ENCODE measurements at regions of chr6 and their contacts with region 1.

Region 1: GRCh38 chr6:6676910-6677441 is 88.5 kb downstream of the LY86 start:
- DNase-seq: peak; percentile 70
- H3K4me3 Mint-ChIP-seq: no peak overlapping the region
- H3K27ac Mint-ChIP-seq: no peak overlapping the region
- H3K4me1 Mint-ChIP-seq: peaks cover 24% of the 10 kb centered on the region
- H3K27me3 Mint-ChIP-seq: no peaks in the 10 kb centered on the region

Region 2: GRCh38 chr6:6788394-6789020 is 111.5 kb after region 1 on chr6:
- intact Hi-C with region 1: loop called (anchors 1 kb)
- DNase-seq: no peak
- H3K4me3 Mint-ChIP-seq: no peak overlapping the region
- H3K27ac Mint-ChIP-seq: no peak overlapping the region
- H3K4me1 Mint-ChIP-seq: peaks cover 21% of the 10 kb centered on the region
- H3K27me3 Mint-ChIP-seq: peaks cover 21% of the 10 kb centered on the region

Region 3: DNA sequence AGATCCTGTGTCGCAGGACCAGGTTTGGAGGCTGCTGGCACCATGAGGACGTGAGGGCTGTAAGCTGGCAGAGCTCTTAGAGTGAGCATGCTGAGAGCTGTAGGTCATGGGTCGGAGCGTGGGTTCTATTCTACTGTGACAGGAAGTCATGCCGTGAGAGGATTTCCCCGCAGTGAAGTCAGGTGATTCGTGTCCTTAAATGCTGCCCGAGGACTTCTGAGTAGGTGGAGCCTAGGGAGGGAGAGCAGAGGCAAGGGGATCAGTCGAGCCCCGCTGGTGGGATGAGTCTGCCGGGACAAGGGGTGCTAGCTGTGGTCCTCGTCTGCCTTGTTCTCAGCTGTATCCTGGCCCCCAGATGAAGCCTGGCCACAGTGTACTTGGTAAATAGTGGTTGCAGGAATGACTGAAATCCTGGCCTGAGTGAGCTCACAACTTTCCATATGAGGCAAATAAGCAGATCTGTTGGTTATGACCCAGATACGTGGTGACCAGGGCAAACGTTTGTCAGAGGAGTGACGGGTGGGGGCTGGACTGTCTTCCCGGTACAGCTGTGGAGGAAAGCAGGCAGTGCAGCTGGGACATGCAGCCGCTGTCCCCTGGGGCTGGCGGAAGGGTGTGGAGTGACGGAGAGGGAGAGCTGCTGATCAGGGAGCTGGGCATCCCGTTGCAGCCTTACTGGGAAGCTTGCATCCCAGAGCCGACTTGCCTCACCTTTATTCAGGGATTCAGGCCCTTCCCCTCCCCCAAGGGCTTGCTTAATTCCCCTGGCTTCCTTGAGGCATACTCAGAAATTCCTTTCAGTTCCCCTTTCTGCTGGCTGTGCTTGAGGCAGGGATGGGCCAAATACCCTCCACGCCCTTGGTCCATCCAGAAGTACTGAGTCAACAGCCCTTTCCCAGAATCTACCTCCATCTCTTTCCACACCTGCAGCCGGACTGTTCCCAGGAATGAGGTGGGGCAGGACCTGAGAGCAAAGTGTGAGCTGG is 179.9 kb after region 1 on chr6:
- intact Hi-C with region 1: loop called (anchors 2 kb)
- DNase-seq: peak; percentile 45
- H3K4me3 Mint-ChIP-seq: peak overlapping the region; percentile 65
- H3K27ac Mint-ChIP-seq: peak overlapping the region; percentile 89
- H3K4me1 Mint-ChIP-seq: peaks cover 42% of the 10 kb centered on the region
- H3K27me3 Mint-ChIP-seq: peaks cover 8% of the 10 kb centered on the region

Region 4: DNA sequence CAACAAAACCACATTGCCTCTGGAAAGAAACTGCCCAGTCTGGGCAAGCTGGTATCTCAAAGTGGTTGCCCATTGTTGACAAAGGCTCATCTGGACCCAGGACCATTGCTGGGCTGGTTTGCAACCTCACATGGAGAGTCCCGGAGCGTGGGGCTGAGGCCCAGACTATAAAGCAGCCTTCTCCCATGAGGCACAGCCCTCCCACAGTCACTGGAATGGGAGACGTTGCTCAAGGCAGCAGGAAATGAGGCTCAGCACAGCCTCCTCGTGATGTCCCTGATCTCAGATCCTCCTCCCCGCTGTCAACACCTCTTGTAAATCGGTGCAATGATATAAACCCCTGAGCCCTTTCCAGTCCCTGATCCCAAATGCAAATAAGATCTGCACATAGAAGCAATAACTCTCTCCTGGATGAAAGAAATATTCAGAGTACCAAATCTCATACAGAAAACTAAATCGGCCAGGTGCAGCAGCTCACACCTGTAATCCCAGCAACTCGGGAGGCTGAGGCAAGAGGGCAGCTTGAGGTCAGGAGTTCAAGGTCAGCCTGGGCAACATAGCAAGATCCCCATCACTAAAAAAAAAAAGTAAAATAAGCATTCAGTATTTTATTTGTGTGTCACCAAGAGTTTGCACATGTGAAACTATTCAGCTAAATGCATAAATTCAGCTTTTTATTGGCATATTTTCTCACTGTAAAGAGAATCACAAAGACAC is 327.8 kb after region 1 on chr6:
- intact Hi-C with region 1: loop called (anchors 10 kb)
- DNase-seq: no peak
- H3K4me3 Mint-ChIP-seq: no peak overlapping the region
- H3K27ac Mint-ChIP-seq: no peak overlapping the region
- H3K4me1 Mint-ChIP-seq: no peaks in the 10 kb centered on the region
- H3K27me3 Mint-ChIP-seq: peaks cover 18% of the 10 kb centered on the region

Region 5: DNA sequence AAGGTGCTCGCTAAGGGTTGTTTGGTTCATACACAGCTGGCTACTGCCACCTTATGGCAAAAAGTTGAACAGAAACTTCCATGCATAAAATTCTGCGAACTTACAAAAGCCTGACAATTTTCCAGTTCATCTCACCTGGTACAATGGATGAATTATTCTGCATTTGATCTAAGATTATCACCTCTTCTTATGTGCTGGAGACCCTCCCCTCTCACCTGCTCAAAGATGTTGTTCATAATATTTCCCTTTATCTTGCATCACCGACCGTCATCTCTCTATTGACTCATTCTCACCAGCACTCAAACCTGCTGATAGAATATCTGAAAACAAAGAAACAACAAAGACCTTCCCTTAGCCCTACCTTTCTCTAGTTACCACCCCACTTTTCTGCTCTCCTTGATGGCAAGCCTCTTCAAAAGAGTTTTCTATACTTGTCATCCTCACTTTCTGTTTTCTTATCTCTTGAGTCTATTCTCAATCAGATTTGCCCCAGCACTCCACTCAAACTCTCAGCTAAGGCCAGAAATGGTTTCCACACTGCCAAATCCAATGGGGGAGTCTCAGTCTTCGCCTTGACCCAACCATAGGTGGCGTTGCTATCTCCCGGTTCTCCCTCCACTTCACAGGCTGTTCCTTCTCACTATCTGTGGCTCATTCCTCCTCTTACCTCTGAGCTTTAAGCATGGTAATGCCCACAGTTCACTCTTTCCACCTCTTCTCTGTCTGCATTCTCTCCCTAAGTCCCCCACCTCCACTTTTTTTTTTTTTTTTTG is 938.8 kb after region 1 on chr6:
- intact Hi-C with region 1: loop called (anchors 2 kb)
- DNase-seq: no peak
- H3K4me3 Mint-ChIP-seq: no peak overlapping the region
- H3K27ac Mint-ChIP-seq: no peak overlapping the region
- H3K4me1 Mint-ChIP-seq: peaks cover 18% of the 10 kb centered on the region
- H3K27me3 Mint-ChIP-seq: peaks cover 3% of the 10 kb centered on the region

Measured in activated T-helper 1 cell treated with anti-CD3 and anti-CD28 coated beads, Interleukin-12 subunit alpha, Interleukin-12 subunit beta, Interleukin-2, Interleukin-4 antibody, amounts not matched to agents 30 ng/mL and 10 ng/mL and 1 ng/mL, durations not matched to agents 14 hours and 24 hours and 36 hours (primary cell).